CD14-positive monocyte (primary cell): ENCODE measurements at regions of chr15 and their contacts with region 1.

Region 1: DNA sequence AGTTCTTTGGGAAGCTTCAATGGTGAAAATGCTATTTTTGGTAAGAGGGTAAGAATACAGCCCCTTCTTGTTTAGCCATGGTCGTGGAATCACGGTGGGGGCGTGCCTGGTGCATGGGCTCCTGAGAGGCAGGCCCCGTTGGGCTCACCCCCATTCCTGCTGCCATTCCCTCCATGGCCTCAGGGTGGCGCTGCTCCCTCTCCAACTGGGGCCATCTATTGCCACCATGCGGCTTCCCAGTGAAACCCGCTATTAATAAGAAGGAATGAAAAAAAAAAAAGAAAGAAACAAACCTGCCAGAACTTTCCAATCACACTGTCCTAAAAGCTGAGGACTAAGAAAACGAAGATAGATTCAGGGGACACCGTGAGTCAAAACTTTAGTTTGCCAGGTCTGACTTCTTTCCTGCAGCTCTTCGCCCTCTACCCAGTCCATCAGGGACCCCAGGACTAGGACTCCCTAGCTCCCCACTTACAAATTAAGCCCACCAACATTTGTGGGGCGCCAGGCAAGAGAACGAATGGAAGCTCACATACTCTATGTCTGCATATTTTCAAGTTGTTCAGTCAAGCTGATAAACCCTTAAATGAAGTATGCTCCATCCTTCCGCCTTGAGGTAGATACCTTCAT is 30.6 kb upstream of the ABHD2 start:
- DNase-seq: peak; percentile 69 to 79 (median 74)
- H3K4me3 ChIP-seq: no peak overlapping the region
- H3K4me3 Mint-ChIP-seq: no peak overlapping the region
- H3K27ac ChIP-seq: no peak overlapping the region
- H3K27ac Mint-ChIP-seq: peak overlapping the region in 3 of 7 donors; percentile 13 to 40 (median 25)
- H3K4me1 ChIP-seq: peaks cover 0 to 5% of the 10 kb centered on the region in 2 donors
- H3K4me1 Mint-ChIP-seq: peaks cover 6% of the 10 kb centered on the region
- H3K27me3 ChIP-seq: no peaks in the 10 kb centered on the region
- H3K27me3 Mint-ChIP-seq: peaks cover 0 to 4% (median 0%) of the 10 kb centered on the region in 3 donors
- CTCF ChIP-seq: peak; percentile 99

Region 2: GRCh38 chr15:89075846-89076245 is 18.2 kb after region 1 on chr15:
- intact Hi-C with region 1: no loop called
- DNase-seq: no peak
- H3K4me3 ChIP-seq: no peak overlapping the region
- H3K4me3 Mint-ChIP-seq: peak overlapping the region in 1 of 2 donors; percentile 13
- H3K27ac ChIP-seq: no peak overlapping the region
- H3K27ac Mint-ChIP-seq: peak overlapping the region in 1 of 7 donors; percentile 2
- H3K4me1 ChIP-seq: peaks cover 32 to 47% of the 10 kb centered on the region in 2 donors
- H3K4me1 Mint-ChIP-seq: peaks cover 37% of the 10 kb centered on the region
- H3K27me3 ChIP-seq: no peaks in the 10 kb centered on the region
- H3K27me3 Mint-ChIP-seq: peaks cover 0 to 3% (median 2%) of the 10 kb centered on the region in 3 donors
- CTCF ChIP-seq: no peak

Region 3: DNA sequence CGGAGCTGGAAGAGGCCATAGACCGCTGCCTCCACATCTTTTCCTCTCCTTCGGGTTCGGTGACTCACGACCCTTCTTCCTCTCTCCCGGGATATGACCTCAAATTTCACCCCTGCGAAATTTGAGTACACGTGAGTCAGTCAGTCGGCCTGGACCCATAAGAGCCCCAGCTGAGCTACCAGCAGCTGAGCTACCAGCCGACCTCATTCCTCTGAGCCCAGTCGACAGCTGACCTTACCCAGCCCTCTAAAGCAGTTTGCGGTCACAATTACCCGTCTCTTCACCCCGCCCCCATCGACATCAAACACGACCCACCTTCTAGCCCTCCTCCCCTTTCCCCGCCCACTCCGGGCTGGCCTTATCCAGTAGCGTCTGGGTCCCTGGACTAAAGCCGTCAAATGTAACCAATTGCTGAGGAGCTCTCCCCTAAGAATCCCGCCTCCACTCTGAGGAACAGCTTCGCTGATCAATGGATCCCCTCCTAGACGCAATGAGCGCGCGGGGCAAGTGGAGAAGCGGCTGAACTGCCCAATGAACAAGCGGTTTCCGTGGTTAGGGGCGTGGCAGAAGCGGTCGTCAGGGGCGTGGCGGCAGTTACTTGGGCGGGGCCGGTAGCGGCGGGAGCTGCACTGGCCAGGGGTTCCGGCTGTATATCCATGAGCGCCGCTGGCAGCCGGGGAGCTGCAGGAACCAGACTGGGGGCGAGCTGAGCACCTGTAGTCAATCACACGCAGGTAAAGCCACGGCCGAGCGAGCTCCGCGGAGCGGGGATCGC is 30.4 kb after region 1 on chr15 and contains the start of gene ABHD2:
- intact Hi-C with region 1: loop called in 1 of 2 experiments (anchors 5 kb)
- DNase-seq: peak; percentile 99
- H3K4me3 ChIP-seq: peak within 1 kb of the TSS; percentile 79 to 97 (median 85)
- H3K4me3 Mint-ChIP-seq: no peak within 1 kb of the TSS
- H3K27ac ChIP-seq: peak within 1 kb of the TSS; percentile 74 to 94
- H3K27ac Mint-ChIP-seq: peak within 1 kb of the TSS in 1 of 7 donors; percentile 98
- H3K4me1 ChIP-seq: peaks cover 50 to 55% of the 10 kb centered on the region in 2 donors
- H3K4me1 Mint-ChIP-seq: peaks cover 42% of the 10 kb centered on the region
- H3K27me3 ChIP-seq: no peaks in the 10 kb centered on the region
- H3K27me3 Mint-ChIP-seq: peaks cover 0 to 2% (median 0%) of the 10 kb centered on the region in 3 donors
- CTCF ChIP-seq: no peak
- polyA plus RNA-seq, gene ABHD2: 30.8 to 67.1 (median 37.3) TPM

Region 4: GRCh38 chr15:89177633-89178306 is 120.2 kb after region 1 on chr15:
- intact Hi-C with region 1: loop called (anchors 1 to 2 kb)
- DNase-seq: peak; percentile 39 to 60 (median 58)
- H3K4me3 ChIP-seq: no peak overlapping the region
- H3K4me3 Mint-ChIP-seq: no peak overlapping the region
- H3K27ac ChIP-seq: peak overlapping the region in 1 of 2 donors; percentile 28
- H3K27ac Mint-ChIP-seq: peak overlapping the region in 5 of 7 donors; percentile 3 to 66 (median 30)
- H3K4me1 ChIP-seq: no peaks in the 10 kb centered on the region
- H3K4me1 Mint-ChIP-seq: no peaks in the 10 kb centered on the region
- H3K27me3 ChIP-seq: no peaks in the 10 kb centered on the region
- H3K27me3 Mint-ChIP-seq: no peaks in the 10 kb centered on the region
- CTCF ChIP-seq: peak; percentile 81